ENCODE measurements at regions of chr17 and their contacts with region 1.

Region 1: GRCh38 chr17:14044702-14045101 is 24.6 kb upstream of the COX10 start:
- DNase-seq: peak; percentile 29
- H3K4me3 ChIP-seq: no peak overlapping the region
- H3K27ac ChIP-seq: no peak overlapping the region
- H3K4me1 ChIP-seq: peaks cover 7% of the 10 kb centered on the region
- H3K27me3 ChIP-seq: no peaks in the 10 kb centered on the region
- CTCF ChIP-seq: no peak
- POLR2A ChIP-seq: no peak

Region 2: DNA sequence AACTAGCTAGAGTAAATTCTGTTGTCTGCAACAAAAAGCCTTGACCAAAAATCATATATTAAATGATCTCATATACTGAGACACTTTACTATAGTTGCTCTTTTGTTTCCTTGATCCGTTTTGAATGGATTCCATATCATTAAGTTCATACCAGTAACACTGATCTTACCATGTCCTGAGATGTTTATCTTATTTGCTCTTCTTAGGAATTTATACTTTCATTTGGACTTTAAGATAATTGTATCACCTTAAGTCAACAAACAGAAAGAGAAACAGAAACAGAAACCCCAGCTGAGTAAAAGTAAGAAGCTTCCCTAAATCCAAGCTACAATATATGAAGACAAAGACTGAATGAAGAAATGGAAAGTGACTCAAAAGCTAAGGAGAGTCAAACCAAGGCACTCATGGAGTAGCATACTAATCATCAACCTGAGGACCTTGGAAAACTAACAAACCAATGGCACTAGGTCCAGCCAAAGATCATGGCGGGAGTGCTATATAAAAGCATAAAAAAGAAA is 81.9 kb before region 1 on chr17:
- CTCF ChIA-PET with region 1: no interaction called
- POLR2A ChIA-PET with region 1: no interaction called
- dilution Hi-C with region 1: no loop called
- intact Hi-C with region 1: no loop called
- DNase-seq: no peak
- H3K4me3 ChIP-seq: no peak overlapping the region
- H3K27ac ChIP-seq: no peak overlapping the region
- H3K4me1 ChIP-seq: no peaks in the 10 kb centered on the region
- H3K27me3 ChIP-seq: no peaks in the 10 kb centered on the region
- CTCF ChIP-seq: no peak
- POLR2A ChIP-seq: no peak

Region 3: GRCh38 chr17:13995856-13996271 is 48.8 kb before region 1 on chr17:
- CTCF ChIA-PET with region 1: no interaction called
- POLR2A ChIA-PET with region 1: no interaction called
- dilution Hi-C with region 1: no loop called
- intact Hi-C with region 1: no loop called
- DNase-seq: no peak
- H3K4me3 ChIP-seq: no peak overlapping the region
- H3K27ac ChIP-seq: no peak overlapping the region
- H3K4me1 ChIP-seq: no peaks in the 10 kb centered on the region
- H3K27me3 ChIP-seq: no peaks in the 10 kb centered on the region
- CTCF ChIP-seq: no peak
- POLR2A ChIP-seq: no peak

Region 4: DNA sequence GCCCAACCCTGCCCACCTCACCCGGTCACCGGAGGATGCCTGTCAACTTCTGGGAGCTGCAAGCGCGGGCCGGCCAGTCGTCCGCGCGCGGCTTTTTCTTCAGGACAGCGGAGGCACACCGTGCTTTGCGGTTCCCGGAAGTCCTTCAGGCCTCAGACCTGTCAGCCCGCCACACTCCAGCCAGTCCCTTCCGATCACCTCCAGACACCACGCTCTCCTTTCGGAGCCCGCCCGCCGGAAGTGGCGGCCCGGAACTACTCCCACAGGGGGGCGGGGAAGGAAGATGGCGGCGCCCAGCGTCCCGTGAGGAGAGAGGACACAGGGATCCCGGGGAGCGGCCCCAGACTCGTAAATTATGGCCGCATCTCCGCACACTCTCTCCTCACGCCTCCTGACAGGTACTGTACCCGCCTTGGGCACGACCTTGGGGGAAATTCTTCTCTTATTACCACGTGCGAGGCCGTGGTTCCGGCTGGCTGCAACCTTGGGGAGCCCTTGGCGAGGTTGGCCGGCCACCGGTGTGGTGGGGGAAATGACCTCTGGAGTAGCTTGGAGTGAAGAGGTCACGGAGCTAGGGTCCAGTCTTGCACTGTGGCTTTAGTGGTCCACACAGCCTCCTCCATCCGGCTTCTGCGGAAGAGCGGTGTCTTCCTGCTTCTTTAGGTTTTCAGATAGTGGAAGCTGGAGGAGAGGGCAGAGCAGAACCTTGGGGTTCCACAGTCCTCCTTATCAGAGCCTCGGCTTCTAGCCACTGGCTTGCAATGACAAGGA is 24.7 kb after region 1 on chr17 and contains the start of gene COX10:
- CTCF ChIA-PET with region 1: no interaction called
- POLR2A ChIA-PET with region 1: no interaction called
- dilution Hi-C with region 1: no loop called
- intact Hi-C with region 1: loop called (anchors 2 kb)
- DNase-seq: peak; percentile 80
- H3K4me3 ChIP-seq: peak within 1 kb of the TSS; percentile 87 to 92 (median 89)
- H3K27ac ChIP-seq: peak within 1 kb of the TSS; percentile 91
- H3K4me1 ChIP-seq: peaks cover 4% of the 10 kb centered on the region
- H3K27me3 ChIP-seq: no peaks in the 10 kb centered on the region
- CTCF ChIP-seq: no peak
- POLR2A ChIP-seq: peak; percentile 87
- total RNA-seq, gene COX10: 12.1 and 12.5 TPM in 2 replicates

Measured in endothelial cell of umbilical vein (primary cell).